A673 (cell line): ENCODE measurements at regions of chr7 and their contacts with region 1.

Region 1: DNA sequence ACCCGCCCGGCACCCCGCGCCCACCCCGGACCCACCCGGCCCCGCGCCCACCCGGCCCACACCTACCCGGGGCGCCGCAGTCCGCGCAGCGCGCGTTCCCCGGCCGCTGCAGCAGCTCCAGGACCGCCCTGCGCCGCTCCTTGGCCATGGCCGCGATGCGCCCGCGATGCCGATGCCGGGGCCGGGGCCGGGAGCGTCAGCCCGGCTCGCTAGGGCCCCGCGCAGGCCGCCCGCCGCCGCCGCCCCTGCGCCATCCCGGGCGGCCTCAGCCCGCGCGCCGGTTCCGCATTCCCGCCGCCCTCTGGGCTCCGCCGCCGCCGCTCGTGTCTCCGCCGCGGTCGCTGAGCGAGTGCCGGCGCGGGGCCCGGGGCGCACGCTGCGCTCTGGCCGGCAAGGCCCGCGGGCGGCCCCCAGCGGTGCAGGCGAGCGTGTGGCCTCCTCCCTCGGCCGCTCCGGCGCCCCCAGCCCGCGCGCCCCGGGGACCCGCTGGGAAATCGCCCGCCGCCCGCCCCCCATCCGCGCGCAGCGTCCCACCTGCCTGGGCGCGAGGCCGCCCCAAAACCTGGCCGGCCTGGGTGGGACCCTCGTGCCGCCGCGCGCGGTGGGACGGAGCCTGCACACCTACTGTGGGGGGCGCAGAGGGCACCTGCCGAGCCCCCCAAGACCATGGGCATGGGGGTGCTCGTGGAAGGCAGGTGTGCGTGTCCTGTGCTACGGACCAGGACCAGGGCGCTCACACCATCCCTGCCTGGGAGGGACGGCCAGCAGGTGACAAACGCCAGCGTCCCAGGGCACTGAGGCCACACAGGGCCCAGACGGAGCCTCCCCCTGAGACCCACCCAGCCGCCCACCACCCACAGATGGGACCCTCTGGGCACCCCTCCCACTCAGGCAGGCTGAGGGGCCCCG is at the start of gene ADAP1:
- DNase-seq: peak; percentile 67
- H3K4me3 ChIP-seq: peak within 1 kb of the TSS; percentile 53
- H3K27ac ChIP-seq: no peak within 1 kb of the TSS
- H3K4me1 ChIP-seq: peaks cover 21% of the 10 kb centered on the region
- H3K27me3 ChIP-seq: no peaks in the 10 kb centered on the region
- CTCF ChIP-seq: no peak
- total RNA-seq, gene ADAP1: 16.4 and 18.6 TPM in 2 replicates

Region 2: DNA sequence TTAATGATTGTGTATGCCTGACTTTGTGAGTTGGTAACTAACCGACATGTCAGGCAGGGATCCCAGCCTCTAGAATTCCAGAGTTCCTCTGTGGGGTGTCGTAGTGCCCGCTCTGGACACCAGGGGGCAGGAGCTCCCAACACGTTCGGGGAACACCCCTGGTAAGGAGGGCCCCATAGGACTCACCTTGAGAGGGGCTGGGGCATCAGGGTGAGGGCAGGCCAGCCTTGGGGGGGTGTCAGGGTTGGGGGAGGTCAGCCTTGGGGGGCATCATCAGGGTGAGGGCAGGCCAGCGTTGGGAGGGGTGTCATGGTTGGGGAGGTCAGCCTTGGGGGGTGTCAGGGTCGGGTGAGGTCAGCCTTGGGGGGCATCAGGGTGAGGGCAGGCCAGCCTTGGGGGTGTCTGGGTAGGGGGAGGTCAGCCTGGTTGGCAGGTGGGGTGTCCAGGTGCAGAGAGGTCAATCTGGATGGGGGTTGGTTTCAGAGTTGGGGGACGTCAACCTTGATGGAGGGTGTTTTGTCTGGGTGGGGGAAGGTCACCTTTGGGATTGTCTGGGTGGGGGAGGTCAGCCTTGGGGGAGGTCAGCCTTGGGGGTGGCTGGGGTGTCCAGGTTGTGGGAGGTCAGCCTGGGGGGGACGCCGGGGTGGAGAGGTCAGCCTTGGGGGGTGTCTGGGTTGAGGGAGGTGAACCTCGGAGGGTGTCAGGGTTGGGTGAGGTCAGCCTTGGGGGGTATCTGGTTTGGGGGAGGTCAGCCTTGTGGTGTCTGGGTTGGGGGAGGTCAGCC is 167.9 kb before region 1 on chr7:
- CTCF ChIA-PET with region 1: interaction called, 6 read pairs
- POLR2A ChIA-PET with region 1: no interaction called
- intact Hi-C with region 1: loop called (anchors 10 kb)
- DNase-seq: peak; percentile 83
- H3K4me3 ChIP-seq: no peak overlapping the region
- H3K27ac ChIP-seq: no peak overlapping the region
- H3K4me1 ChIP-seq: peaks cover 8% of the 10 kb centered on the region
- H3K27me3 ChIP-seq: no peaks in the 10 kb centered on the region
- CTCF ChIP-seq: peak; percentile 94

Region 3: GRCh38 chr7:909358-910329 is 44.9 kb before region 1 on chr7:
- CTCF ChIA-PET with region 1: no interaction called
- POLR2A ChIA-PET with region 1: no interaction called
- intact Hi-C with region 1: loop called (anchors 5 kb)
- DNase-seq: no peak
- H3K4me3 ChIP-seq: peak overlapping the region; percentile 38
- H3K27ac ChIP-seq: no peak overlapping the region
- H3K4me1 ChIP-seq: peaks cover 14% of the 10 kb centered on the region
- H3K27me3 ChIP-seq: peaks cover 7% of the 10 kb centered on the region
- CTCF ChIP-seq: no peak